Left cardiac atrium (tissue), 4 donors: ENCODE measurements at regions of chr9 and their contacts with region 1.

Region 1: DNA sequence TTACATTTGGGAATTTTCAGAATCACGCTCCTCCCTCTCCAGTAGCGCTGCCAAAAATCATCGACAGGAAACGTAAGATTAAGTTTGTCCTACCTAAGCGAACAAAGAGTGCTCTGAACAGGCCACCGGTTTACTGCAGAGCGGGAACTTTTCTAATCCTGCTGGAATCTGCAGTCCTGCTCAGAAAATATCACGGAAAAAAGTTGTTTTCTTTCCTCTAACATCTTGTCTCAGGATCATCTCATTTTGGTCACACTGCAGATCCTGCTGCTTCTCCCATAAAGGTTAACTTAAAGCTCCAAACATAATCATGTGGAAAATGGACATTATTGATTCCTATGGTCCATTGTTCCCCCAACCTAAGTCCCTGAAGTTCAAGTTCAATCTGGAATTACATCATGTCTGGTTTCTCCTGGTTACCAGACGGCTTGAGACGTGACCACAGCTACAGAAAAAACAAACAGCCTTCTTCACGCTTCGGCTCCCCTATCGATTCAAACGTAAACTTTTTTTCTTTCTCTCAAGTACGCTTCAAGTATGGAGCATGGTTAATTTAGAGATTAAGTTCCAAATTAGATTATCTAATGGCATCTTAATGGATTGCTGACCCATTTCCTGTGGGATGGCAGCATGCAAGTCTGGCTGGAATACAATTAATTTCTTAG is 217.6 kb downstream of the NFIB start:
- DNase-seq: no peak
- ATAC-seq: peak; percentile 70 to 86

Region 2: GRCh38 chr9:13832451-13832850 is 263.9 kb before region 1 on chr9:
- intact Hi-C with region 1: no loop called
- DNase-seq: no peak
- ATAC-seq: no peak

Region 3: GRCh38 chr9:14030375-14031059 is 65.9 kb before region 1 on chr9:
- intact Hi-C with region 1: loop called in 1 of 2 experiments (anchors 5 kb)
- DNase-seq: no peak
- ATAC-seq: peak in 1 of 2 donors; percentile 48

Region 4: DNA sequence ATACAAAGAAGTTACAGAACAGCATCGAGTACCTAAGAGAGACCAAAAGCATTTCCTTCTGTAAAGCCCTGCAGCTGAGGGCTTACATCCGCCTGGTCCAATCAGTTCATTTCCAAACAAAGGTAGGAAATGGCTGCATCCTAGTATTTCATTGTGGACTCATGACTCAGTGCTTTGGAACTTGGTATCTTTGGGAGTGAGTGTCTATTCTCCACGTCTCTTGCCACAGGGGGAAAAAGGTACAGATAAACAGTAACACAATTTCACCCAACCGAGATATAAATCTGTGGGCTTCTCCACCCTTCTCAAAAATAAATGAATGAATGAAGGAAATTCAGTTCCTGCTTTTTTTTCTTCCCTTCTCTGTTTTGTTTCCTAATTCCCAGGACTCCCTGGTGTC is 142.2 kb after region 1 on chr9:
- intact Hi-C with region 1: no loop called
- DNase-seq: no peak
- ATAC-seq: peak; percentile 28 to 87